Ovary (tissue), 10 donors: ENCODE measurements at regions of chr10 and their contacts with region 1.

Region 1: DNA sequence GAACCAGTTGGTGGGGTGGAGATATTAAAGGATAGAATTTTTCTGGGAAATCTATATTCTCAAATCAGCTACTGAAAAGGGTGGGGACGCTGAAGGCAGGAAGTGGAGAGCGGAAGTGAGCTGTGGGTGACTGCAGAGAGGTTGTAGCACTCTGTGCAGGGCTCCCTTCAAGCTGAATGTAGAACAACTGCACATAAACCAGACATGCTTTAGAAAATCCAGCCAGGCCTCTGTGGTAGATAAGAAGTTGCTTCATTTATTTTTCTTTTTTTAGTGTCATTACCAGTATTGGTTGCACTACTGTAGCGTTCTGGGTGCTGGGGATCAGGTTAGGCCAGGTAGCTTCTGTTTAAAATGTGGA is 127.8 kb downstream of the CELF2 start:
- DNase-seq: no peak
- H3K4me3 ChIP-seq: no peak overlapping the region
- H3K27ac ChIP-seq: no peak overlapping the region
- H3K4me1 ChIP-seq: peaks cover 14% of the 10 kb centered on the region
- H3K27me3 ChIP-seq: no peaks in the 10 kb centered on the region
- CTCF ChIP-seq: no peak
- EP300 ChIP-seq: no peak
- POLR2A ChIP-seq: no peak

Region 2: DNA sequence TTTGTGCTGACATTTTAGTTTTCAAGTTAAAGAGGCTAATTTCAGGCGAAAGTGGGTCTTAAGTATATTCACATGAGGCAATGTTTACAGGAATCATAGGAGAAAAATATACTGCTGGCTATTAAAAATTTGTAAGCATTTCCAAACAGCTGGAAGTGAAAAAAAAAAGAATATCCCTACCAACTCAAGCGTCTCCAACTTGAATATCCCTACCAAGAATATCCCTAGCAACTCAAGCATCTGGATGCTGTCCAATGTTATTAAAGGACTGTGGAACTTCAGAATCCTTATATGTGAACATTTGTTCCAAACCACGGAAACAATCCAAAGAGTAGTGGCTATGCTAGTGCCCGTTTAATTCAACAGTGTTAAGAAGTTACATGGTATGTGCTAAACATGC is 1788.0 kb before region 1 on chr10:
- intact Hi-C with region 1: loop called in 1 of 4 experiments (anchors 10 kb)
- DNase-seq: no peak
- H3K4me3 ChIP-seq: no peak overlapping the region
- H3K27ac ChIP-seq: no peak overlapping the region
- H3K4me1 ChIP-seq: no peaks in the 10 kb centered on the region
- H3K27me3 ChIP-seq: no peaks in the 10 kb centered on the region
- CTCF ChIP-seq: no peak
- EP300 ChIP-seq: no peak
- POLR2A ChIP-seq: no peak

Region 3: GRCh38 chr10:9501954-9502353 is 1643.5 kb before region 1 on chr10:
- intact Hi-C with region 1: no loop called
- DNase-seq: no peak
- H3K4me3 ChIP-seq: no peak overlapping the region
- H3K27ac ChIP-seq: no peak overlapping the region
- H3K4me1 ChIP-seq: no peaks in the 10 kb centered on the region
- H3K27me3 ChIP-seq: no peaks in the 10 kb centered on the region
- CTCF ChIP-seq: no peak
- EP300 ChIP-seq: no peak
- POLR2A ChIP-seq: no peak